Caco-2 (cell line): ENCODE measurements at regions of chr3 and their contacts with region 1.

Region 1: GRCh38 chr3:140599501-140599900 is 78.4 kb upstream of the TRIM42 start:
- DNase-seq: peak in 1 of 2 experiments; percentile 10
- H3K4me3 ChIP-seq: no peak overlapping the region
- H3K4me3 Mint-ChIP-seq: no peak overlapping the region
- H3K27ac Mint-ChIP-seq: no peak overlapping the region
- H3K4me1 ChIP-seq: no peaks in the 10 kb centered on the region
- H3K4me1 Mint-ChIP-seq: no peaks in the 10 kb centered on the region
- H3K27me3 ChIP-seq: no peaks in the 10 kb centered on the region
- H3K27me3 Mint-ChIP-seq: no peaks in the 10 kb centered on the region
- CTCF ChIP-seq: no peak

Region 2: DNA sequence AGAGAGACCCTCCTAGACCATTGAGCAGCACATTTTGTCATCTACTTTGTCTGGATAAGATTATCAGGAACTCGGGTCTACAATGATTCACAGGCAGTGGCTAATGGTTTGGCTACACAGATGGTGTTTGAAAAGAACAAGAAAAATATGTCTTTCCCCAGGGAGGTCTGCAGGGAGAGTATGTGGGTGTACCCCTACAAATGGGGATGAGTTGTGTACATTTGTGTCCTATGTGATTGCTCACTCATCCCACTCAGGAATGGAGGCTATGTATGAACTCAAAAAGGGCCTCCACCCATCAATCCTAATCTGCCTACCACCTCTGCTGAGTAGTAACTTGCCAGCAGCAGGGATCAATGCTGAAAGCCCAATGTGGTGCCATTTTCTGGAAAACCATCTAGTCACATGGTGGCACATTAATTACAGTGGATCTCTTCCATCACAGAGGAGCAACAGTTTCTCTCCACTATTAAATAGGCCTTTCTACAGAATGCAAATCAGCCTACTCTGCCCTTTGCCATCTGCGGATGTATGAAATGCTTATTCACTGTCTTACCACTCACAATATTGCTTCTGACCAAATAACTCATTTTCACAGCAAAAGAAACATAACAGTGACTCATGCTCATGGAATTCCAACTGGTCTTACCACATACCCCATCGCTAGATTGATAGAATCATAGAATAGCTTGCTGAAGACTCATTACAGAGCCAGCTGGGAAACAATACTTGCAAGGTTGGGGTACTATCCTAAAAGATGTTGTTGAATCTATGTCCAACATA is 30.0 kb after region 1 on chr3:
- CTCF ChIA-PET with region 1: no interaction called
- POLR2A ChIA-PET with region 1: no interaction called
- intact Hi-C with region 1: loop called (anchors 2 kb)
- DNase-seq: peak in 1 of 2 experiments; percentile 44
- H3K4me3 ChIP-seq: no peak overlapping the region
- H3K4me3 Mint-ChIP-seq: no peak overlapping the region
- H3K27ac Mint-ChIP-seq: peak overlapping the region; percentile 67
- H3K4me1 ChIP-seq: peaks cover 33% of the 10 kb centered on the region
- H3K4me1 Mint-ChIP-seq: peaks cover 28% of the 10 kb centered on the region
- H3K27me3 ChIP-seq: no peaks in the 10 kb centered on the region
- H3K27me3 Mint-ChIP-seq: no peaks in the 10 kb centered on the region
- CTCF ChIP-seq: no peak